ENCODE measurements at regions of chr4 and their contacts with region 1.

Region 1: GRCh38 chr4:26719954-26720552 is 136.2 kb downstream of the TBC1D19 start:
- DNase-seq: peak; percentile 8
- ATAC-seq: no peak
- H3K4me3 ChIP-seq: no peak overlapping the region
- H3K27ac ChIP-seq: no peak overlapping the region
- H3K4me1 ChIP-seq: peaks cover 0 to 10% of the 10 kb centered on the region in 2 experiments; a peak in 2 of 4 replicates
- H3K27me3 ChIP-seq: no peaks in the 10 kb centered on the region
- CTCF ChIP-seq: peak; percentile 47 to 86 (median 76); a peak in 5 of 6 replicates
- POLR2A ChIP-seq: no peak
- RAD21 ChIP-seq: peak; percentile 89

Region 2: GRCh38 chr4:26061248-26061986 is 658.6 kb before region 1 on chr4:
- CTCF ChIA-PET with region 1: no interaction called
- POLR2A ChIA-PET with region 1: no interaction called
- RAD21 ChIA-PET with region 1: no interaction called
- intact Hi-C with region 1: loop called (anchors 5 kb)
- DNase-seq: peak; percentile 63
- ATAC-seq: peak; percentile 99
- H3K4me3 ChIP-seq: no peak overlapping the region
- H3K27ac ChIP-seq: no peak overlapping the region
- H3K4me1 ChIP-seq: peaks cover 0 to 5% of the 10 kb centered on the region in 2 experiments; a peak in 1 of 4 replicates
- H3K27me3 ChIP-seq: no peaks in the 10 kb centered on the region
- CTCF ChIP-seq: peak; percentile 62 to 89 (median 81); a peak in 5 of 6 replicates
- POLR2A ChIP-seq: no peak
- RAD21 ChIP-seq: peak; percentile 85

Region 3: GRCh38 chr4:26424838-26425237 is 295.2 kb before region 1 on chr4:
- CTCF ChIA-PET with region 1: no interaction called
- POLR2A ChIA-PET with region 1: no interaction called
- RAD21 ChIA-PET with region 1: no interaction called
- intact Hi-C with region 1: loop called (anchors 2 kb)
- DNase-seq: no peak
- ATAC-seq: no peak
- H3K4me3 ChIP-seq: no peak overlapping the region
- H3K27ac ChIP-seq: no peak overlapping the region
- H3K4me1 ChIP-seq: no peaks in the 10 kb centered on the region
- H3K27me3 ChIP-seq: no peaks in the 10 kb centered on the region
- CTCF ChIP-seq: peak; percentile 15 to 52 (median 16); a peak in 3 of 6 replicates
- POLR2A ChIP-seq: no peak
- RAD21 ChIP-seq: peak; percentile 37

Region 4: GRCh38 chr4:26459054-26459755 is 260.8 kb before region 1 on chr4:
- CTCF ChIA-PET with region 1: interaction called, 4 read pairs
- POLR2A ChIA-PET with region 1: no interaction called
- RAD21 ChIA-PET with region 1: interaction called in 1 of 2 experiments, 3 read pairs
- intact Hi-C with region 1: loop called (anchors 2 kb)
- DNase-seq: peak; percentile 61
- ATAC-seq: peak; percentile 85
- H3K4me3 ChIP-seq: peak overlapping the region; percentile 32 to 46
- H3K27ac ChIP-seq: no peak overlapping the region
- H3K4me1 ChIP-seq: peaks cover 0 to 15% of the 10 kb centered on the region in 2 experiments; a peak in 2 of 4 replicates
- H3K27me3 ChIP-seq: no peaks in the 10 kb centered on the region
- CTCF ChIP-seq: peak; percentile 62 to 72 (median 63); a peak in 5 of 6 replicates
- POLR2A ChIP-seq: no peak
- RAD21 ChIP-seq: peak; percentile 84

Measured in HCT116 (cell line).